ENCODE measurements at regions of chr6 and their contacts with region 1.

Region 1: DNA sequence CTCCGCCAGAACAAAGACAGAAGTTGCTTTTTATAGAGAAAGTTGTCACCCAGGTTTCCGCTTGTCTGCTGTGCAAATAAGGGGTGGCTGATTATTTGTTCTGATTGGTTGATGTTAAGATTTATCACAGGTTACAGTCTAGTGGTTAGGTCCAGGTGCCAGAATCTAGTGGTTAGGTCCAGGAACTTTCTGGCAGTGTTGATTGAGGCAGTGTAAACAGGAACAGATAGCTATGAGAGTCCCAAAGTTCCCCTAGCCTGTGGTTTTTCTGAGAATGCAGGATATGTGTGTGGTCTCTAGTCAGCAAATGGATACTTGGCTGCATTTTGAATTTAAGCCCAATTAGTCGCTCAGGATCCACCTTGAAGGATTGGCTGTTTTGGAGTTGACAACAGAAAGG is 148.0 kb downstream of the TMEM200A start:
- DNase-seq: peak; percentile 90
- ATAC-seq: peak; percentile 97
- H3K4me3 Mint-ChIP-seq: peak overlapping the region; percentile 61
- H3K27ac Mint-ChIP-seq: peak overlapping the region; percentile 91
- H3K4me1 Mint-ChIP-seq: peaks cover 65% of the 10 kb centered on the region
- H3K27me3 Mint-ChIP-seq: no peaks in the 10 kb centered on the region

Region 2: DNA sequence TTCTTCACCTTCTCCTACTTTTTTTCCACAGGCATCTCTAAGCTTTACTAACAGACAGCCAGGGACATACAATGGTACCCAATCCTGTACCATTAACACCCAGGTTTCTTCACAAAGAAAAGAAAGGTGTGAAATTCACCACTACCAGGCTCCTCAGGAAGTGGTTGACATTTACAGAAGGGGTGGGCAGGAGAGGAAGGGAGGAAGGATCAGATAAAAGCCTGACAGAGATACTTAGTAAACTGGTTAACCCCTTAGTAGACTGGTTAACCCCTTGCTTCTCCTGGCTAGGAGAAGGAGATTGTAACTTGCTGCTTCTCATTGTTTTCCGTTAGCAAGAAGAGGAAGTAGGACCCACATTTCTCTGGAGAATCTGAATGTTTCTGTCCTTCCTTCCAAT is 298.2 kb before region 1 on chr6:
- CTCF ChIA-PET with region 1: no interaction called
- POLR2A ChIA-PET with region 1: no interaction called
- DNase-seq: peak; percentile 74
- ATAC-seq: peak; percentile 92
- H3K4me3 Mint-ChIP-seq: peak overlapping the region; percentile 69
- H3K27ac Mint-ChIP-seq: peak overlapping the region; percentile 79
- H3K4me1 Mint-ChIP-seq: peaks cover 68% of the 10 kb centered on the region
- H3K27me3 Mint-ChIP-seq: no peaks in the 10 kb centered on the region

Region 3: DNA sequence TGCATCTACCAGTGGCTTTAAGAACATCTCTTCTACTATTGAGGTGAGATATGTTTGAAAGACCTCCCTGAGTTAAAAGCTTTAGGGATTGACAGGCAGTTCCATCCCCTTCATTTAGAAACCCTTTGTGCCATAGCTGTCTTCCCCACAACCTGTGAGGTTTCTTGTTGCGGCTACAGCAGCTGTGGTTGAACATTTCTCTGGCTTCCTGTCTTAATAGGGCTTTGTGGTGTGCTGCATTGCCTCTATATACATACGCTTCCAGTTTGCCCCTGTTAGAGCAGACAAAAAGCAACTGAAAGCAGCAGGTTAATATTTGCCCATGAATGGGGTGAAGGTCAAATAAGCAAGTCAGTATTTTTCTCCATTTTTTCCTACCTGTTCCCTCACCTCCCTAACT is 62.2 kb after region 1 on chr6:
- CTCF ChIA-PET with region 1: interaction called, 4 read pairs
- POLR2A ChIA-PET with region 1: interaction called, 18 read pairs
- DNase-seq: peak; percentile 90
- ATAC-seq: peak; percentile 95
- H3K4me3 Mint-ChIP-seq: peak overlapping the region; percentile 62
- H3K27ac Mint-ChIP-seq: peak overlapping the region; percentile 92
- H3K4me1 Mint-ChIP-seq: peaks cover 54% of the 10 kb centered on the region
- H3K27me3 Mint-ChIP-seq: no peaks in the 10 kb centered on the region

Measured in activated CD8-positive, alpha-beta T cell treated with anti-CD3 and anti-CD28 coated beads, Interleukin-2, amount 10 ng/mL, durations not matched to agents 7 days and 5 days (primary cell).